MCF 10A (cell line): ENCODE measurements at regions of chr2 and their contacts with region 1.

Region 1: GRCh38 chr2:27281855-27282559 is at the start of gene TRIM54:
- DNase-seq: no peak
- H3K4me3 Mint-ChIP-seq: no peak within 1 kb of the TSS
- H3K27ac Mint-ChIP-seq: no peak within 1 kb of the TSS
- H3K4me1 Mint-ChIP-seq: peaks cover 12% of the 10 kb centered on the region
- H3K27me3 Mint-ChIP-seq: peaks cover 16% of the 10 kb centered on the region
- CTCF ChIP-seq: no peak
- total RNA-seq, gene TRIM54: not detected in 2 replicates

Region 2: DNA sequence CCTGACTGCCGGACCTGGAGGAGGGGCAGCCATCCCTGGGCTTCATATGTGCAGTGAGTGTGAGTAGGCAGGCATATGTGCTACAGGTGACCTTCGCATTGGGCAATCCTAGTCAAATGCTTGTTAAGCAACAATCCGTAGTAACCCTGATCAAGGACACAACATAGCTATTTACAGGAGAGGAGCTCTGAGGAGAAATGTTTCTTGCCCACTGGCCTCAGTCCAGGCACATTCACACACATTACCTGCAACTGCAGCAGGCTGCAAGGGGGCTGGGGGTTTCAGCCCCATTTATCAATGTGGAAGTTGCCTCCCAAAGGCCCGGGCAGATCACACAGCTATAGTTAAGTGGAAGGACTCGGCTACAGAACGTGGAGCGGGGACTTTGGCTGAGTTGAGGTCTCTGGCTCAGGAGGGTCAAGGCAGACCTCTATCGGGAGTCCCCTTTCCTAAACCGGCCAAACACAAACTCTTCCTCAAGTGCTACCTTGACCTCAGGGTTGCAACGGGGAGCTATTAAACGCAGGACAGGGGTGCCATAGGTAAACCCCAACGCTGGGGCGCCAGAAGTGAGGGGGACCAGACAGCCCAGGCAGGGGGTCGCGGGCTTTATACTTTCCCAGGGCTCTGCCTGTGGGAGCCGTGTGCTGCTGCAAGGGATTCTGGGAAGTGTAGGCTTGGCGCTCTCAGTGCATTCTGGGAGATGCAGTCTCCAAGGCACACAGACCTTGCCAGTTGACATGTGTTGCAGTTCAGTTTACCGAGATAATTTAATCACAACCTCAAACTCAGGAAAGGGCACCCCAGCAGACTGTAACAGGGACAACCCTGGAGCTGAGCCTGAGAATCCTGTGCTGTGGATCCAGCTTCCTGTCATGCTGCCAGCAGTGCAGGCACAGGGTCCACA is 186.0 kb before region 1 on chr2:
- CTCF ChIA-PET with region 1: interaction called, 96 read pairs
- POLR2A ChIA-PET with region 1: interaction called, 3 read pairs
- intact Hi-C with region 1: loop called (anchors 1 kb)
- DNase-seq: peak; percentile 46
- H3K4me3 Mint-ChIP-seq: no peak overlapping the region
- H3K27ac Mint-ChIP-seq: no peak overlapping the region
- H3K4me1 Mint-ChIP-seq: no peaks in the 10 kb centered on the region
- H3K27me3 Mint-ChIP-seq: no peaks in the 10 kb centered on the region
- CTCF ChIP-seq: no peak

Region 3: DNA sequence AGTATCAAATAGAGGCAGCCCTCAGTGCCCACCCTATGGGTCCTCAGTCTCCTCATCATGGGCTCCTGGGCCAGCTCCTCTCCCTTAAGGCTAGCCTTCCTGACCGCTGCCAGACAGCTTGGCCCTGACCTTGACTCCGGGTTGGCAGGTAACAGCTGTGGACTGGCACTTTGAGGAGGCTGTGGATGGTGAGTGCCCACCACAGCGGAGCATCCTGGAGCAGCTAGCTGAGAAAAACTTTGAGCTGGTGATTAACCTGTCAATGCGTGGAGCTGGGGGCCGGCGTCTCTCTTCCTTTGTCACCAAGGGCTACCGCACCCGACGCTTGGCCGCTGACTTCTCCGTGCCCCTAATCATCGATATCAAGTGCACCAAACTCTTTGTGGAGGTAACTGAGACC is 45.9 kb before region 1 on chr2:
- CTCF ChIA-PET with region 1: interaction called, 10 read pairs
- POLR2A ChIA-PET with region 1: no interaction called
- intact Hi-C with region 1: no loop called
- DNase-seq: no peak
- H3K4me3 Mint-ChIP-seq: no peak overlapping the region
- H3K27ac Mint-ChIP-seq: no peak overlapping the region
- H3K4me1 Mint-ChIP-seq: no peaks in the 10 kb centered on the region
- H3K27me3 Mint-ChIP-seq: no peaks in the 10 kb centered on the region
- CTCF ChIP-seq: no peak

Region 4: GRCh38 chr2:27271631-27272340 is 10.2 kb before region 1 on chr2:
- CTCF ChIA-PET with region 1: interaction called, 41 read pairs
- POLR2A ChIA-PET with region 1: interaction called, 3 read pairs
- intact Hi-C with region 1: no loop called
- DNase-seq: no peak
- H3K4me3 Mint-ChIP-seq: no peak overlapping the region
- H3K27ac Mint-ChIP-seq: no peak overlapping the region
- H3K4me1 Mint-ChIP-seq: peaks cover 7% of the 10 kb centered on the region
- H3K27me3 Mint-ChIP-seq: peaks cover 1% of the 10 kb centered on the region
- CTCF ChIP-seq: no peak

Region 5: GRCh38 chr2:27701676-27702075 is 419.7 kb after region 1 on chr2:
- CTCF ChIA-PET with region 1: no interaction called
- POLR2A ChIA-PET with region 1: no interaction called
- intact Hi-C with region 1: no loop called
- DNase-seq: no peak
- H3K4me3 Mint-ChIP-seq: no peak overlapping the region
- H3K27ac Mint-ChIP-seq: no peak overlapping the region
- H3K4me1 Mint-ChIP-seq: peaks cover 32% of the 10 kb centered on the region
- H3K27me3 Mint-ChIP-seq: no peaks in the 10 kb centered on the region
- CTCF ChIP-seq: no peak